ENCODE measurements at regions of chr2 and their contacts with region 1.

Region 1: DNA sequence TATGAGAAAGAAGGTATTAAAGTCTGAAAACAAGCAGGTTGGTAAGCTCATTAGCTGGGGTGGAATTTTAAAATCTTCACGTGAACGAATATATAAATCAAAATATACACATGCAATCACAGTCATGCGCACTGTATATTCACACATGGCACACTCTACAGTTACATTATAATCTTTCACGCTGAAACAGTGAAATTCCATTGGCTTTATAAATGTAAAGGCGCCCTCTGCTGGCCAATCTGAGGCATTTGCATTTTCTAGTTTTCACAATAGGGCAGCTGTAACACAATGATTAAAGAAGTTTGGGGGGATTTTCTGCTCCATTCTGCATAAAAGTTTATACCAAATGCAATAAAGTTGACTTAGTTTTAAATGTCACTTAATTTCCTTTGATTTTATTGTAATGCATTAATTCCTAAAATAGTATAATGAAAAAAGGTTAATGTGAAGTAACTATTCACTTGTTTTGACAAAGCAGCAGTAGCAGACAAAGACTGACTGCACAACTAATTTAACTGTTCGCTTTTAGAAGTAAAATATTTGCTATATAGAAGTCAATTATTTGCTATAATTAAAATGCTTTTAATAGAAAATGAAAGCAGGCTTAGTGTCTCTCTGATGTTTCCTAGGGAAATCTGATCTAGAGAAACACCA is 17.2 kb downstream of the IFIH1 start:
- DNase-seq: peak; percentile 45
- ATAC-seq: peak; percentile 80 to 82
- H3K4me3 ChIP-seq: no peak overlapping the region
- H3K27ac ChIP-seq: no peak overlapping the region
- H3K4me1 ChIP-seq: no peaks in the 10 kb centered on the region
- H3K27me3 ChIP-seq: no peaks in the 10 kb centered on the region
- CTCF ChIP-seq: peak; percentile 93

Region 2: DNA sequence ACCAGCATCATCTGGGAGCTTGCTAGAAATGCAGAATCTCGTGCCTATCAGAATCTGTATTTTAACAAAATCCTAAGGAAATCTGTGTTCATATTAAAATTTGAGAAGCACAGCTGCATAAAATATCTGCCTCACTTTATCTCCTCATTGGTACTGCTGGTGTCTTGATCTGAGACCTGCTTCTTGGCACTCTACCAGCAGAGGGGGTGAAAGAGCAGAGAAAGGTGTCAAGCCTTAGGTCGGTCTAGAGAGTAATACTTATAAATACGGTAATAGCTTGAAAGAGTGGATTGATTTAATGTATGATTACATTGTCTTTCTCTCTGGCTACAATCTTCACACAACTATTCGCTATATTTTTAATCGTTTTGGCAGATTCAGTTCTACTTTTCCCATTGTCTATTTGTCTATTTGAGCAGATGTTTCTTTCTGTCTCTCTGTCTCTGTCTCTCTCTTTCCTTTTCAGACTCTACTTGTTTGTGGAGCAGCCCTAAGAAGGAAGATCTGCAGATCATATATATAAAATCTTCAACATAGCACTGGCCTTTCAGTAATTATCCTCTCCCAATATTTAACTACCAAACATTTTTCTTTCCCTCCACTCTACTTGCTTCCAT is 147.6 kb before region 1 on chr2:
- intact Hi-C with region 1: loop called (anchors 10 kb)
- DNase-seq: no peak
- ATAC-seq: peak; percentile 73 to 78
- H3K4me3 ChIP-seq: no peak overlapping the region
- H3K27ac ChIP-seq: no peak overlapping the region
- H3K4me1 ChIP-seq: no peaks in the 10 kb centered on the region
- H3K27me3 ChIP-seq: peaks cover 6% of the 10 kb centered on the region
- CTCF ChIP-seq: peak; percentile 51

Region 3: GRCh38 chr2:162221064-162221463 is 80.2 kb before region 1 on chr2:
- intact Hi-C with region 1: loop called (anchors 5 kb)
- DNase-seq: peak; percentile 81
- ATAC-seq: peak; percentile 93 to 95
- H3K4me3 ChIP-seq: no peak overlapping the region
- H3K27ac ChIP-seq: no peak overlapping the region
- H3K4me1 ChIP-seq: peaks cover 6% of the 10 kb centered on the region
- H3K27me3 ChIP-seq: no peaks in the 10 kb centered on the region
- CTCF ChIP-seq: peak; percentile 90

Region 4: DNA sequence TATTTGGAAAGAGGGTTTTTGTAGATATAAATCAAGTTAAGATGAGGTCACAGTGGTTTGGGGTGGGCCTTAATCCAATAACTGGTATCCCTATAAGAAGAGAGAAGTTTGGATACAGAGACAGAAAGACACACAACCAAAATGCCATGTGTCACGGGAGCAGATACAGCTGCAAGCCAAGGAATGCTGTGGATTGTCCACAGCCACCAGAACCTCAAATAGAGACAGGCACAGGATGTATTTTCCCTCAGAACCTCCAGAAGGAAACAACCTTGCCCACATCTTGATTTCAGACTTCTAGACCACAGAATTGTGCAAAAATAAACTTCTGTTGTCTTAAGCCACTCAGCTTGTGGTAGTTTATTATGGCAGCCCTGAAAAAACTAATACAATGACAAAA is 148.2 kb after region 1 on chr2:
- intact Hi-C with region 1: no loop called
- DNase-seq: no peak
- ATAC-seq: no peak
- H3K4me3 ChIP-seq: no peak overlapping the region
- H3K27ac ChIP-seq: no peak overlapping the region
- H3K4me1 ChIP-seq: no peaks in the 10 kb centered on the region
- H3K27me3 ChIP-seq: no peaks in the 10 kb centered on the region
- CTCF ChIP-seq: no peak

Measured in lower lobe of right lung (tissue), 2 donors.